IMR-90 (cell line): ENCODE measurements at regions of chr18 and their contacts with region 1.

Region 1: GRCh38 chr18:22412176-22412908 is 5.4 kb downstream of the CTAGE1 start:
- DNase-seq: peak; percentile 69
- ATAC-seq: peak; percentile 27; the same call in 1 of the 2 replicates
- H3K4me3 ChIP-seq: no peak overlapping the region
- H3K27ac ChIP-seq: no peak overlapping the region
- H3K4me1 ChIP-seq: peaks cover 1% of the 10 kb centered on the region; the same call in 1 of the 2 replicates
- H3K27me3 ChIP-seq: no peaks in the 10 kb centered on the region; the same call in 1 of the 2 replicates
- CTCF ChIP-seq: no peak
- POLR2A ChIP-seq: no peak
- RAD21 ChIP-seq: no peak

Region 2: GRCh38 chr18:22391407-22392345 is 20.7 kb before region 1 on chr18:
- CTCF ChIA-PET with region 1: no interaction called
- POLR2A ChIA-PET with region 1: no interaction called
- dilution Hi-C with region 1: no loop called
- in situ Hi-C with region 1: no loop called
- intact Hi-C with region 1: loop called (anchors 1 kb)
- DNase-seq: peak; percentile 96
- ATAC-seq: peak; percentile 84
- H3K4me3 ChIP-seq: peak overlapping the region; percentile 4; the same call in 1 of the 2 replicates
- H3K27ac ChIP-seq: no peak overlapping the region
- H3K4me1 ChIP-seq: 0 out of 2 replicates have a peak, but pooled peaks cover 4% of the 10 kb centered on the region
- H3K27me3 ChIP-seq: peaks cover 4% of the 10 kb centered on the region; the same call in 1 of the 2 replicates
- CTCF ChIP-seq: no peak
- POLR2A ChIP-seq: peak; percentile 40; the same call in 1 of the 2 replicates
- RAD21 ChIP-seq: 0 out of 2 replicates have a peak, but pooled peaks have one; percentile 4

Region 3: GRCh38 chr18:22703883-22704585 is 291.7 kb after region 1 on chr18:
- CTCF ChIA-PET with region 1: no interaction called
- POLR2A ChIA-PET with region 1: no interaction called
- dilution Hi-C with region 1: no loop called
- in situ Hi-C with region 1: no loop called
- intact Hi-C with region 1: no loop called
- DNase-seq: peak; percentile 40
- ATAC-seq: peak; percentile 27; the same call in 1 of the 2 replicates
- H3K4me3 ChIP-seq: no peak overlapping the region
- H3K27ac ChIP-seq: no peak overlapping the region
- H3K4me1 ChIP-seq: peaks cover 3% of the 10 kb centered on the region; the same call in 1 of the 2 replicates
- H3K27me3 ChIP-seq: no peaks in the 10 kb centered on the region
- CTCF ChIP-seq: peak; percentile 53
- POLR2A ChIP-seq: no peak
- RAD21 ChIP-seq: peak; percentile 51